CD8-positive, alpha-beta T cell (primary cell): ENCODE measurements at regions of chr17 and their contacts with region 1.

Region 1: GRCh38 chr17:48420823-48421222 is 9.2 kb downstream of the SKAP1 start:
- DNase-seq: no peak
- ATAC-seq: no peak
- H3K4me3 ChIP-seq: no peak overlapping the region
- H3K4me3 Mint-ChIP-seq: peak overlapping the region; percentile 37
- H3K27ac ChIP-seq: peak overlapping the region in 1 of 2 experiments; percentile 32
- H3K27ac Mint-ChIP-seq: no peak overlapping the region
- H3K4me1 ChIP-seq: peaks cover 72% of the 10 kb centered on the region
- H3K4me1 Mint-ChIP-seq: peaks cover 77% of the 10 kb centered on the region
- H3K27me3 ChIP-seq: no peaks in the 10 kb centered on the region
- H3K27me3 Mint-ChIP-seq: no peaks in the 10 kb centered on the region
- CTCF ChIP-seq: no peak

Region 2: GRCh38 chr17:48310748-48311213 is 110.0 kb before region 1 on chr17:
- CTCF ChIA-PET with region 1: no interaction called
- POLR2A ChIA-PET with region 1: no interaction called
- intact Hi-C with region 1: no loop called
- DNase-seq: no peak
- ATAC-seq: no peak
- H3K4me3 ChIP-seq: no peak overlapping the region
- H3K4me3 Mint-ChIP-seq: no peak overlapping the region
- H3K27ac ChIP-seq: no peak overlapping the region
- H3K27ac Mint-ChIP-seq: no peak overlapping the region
- H3K4me1 ChIP-seq: no peaks in the 10 kb centered on the region
- H3K4me1 Mint-ChIP-seq: peaks cover 23% of the 10 kb centered on the region
- H3K27me3 ChIP-seq: no peaks in the 10 kb centered on the region
- H3K27me3 Mint-ChIP-seq: no peaks in the 10 kb centered on the region
- CTCF ChIP-seq: no peak

Region 3: DNA sequence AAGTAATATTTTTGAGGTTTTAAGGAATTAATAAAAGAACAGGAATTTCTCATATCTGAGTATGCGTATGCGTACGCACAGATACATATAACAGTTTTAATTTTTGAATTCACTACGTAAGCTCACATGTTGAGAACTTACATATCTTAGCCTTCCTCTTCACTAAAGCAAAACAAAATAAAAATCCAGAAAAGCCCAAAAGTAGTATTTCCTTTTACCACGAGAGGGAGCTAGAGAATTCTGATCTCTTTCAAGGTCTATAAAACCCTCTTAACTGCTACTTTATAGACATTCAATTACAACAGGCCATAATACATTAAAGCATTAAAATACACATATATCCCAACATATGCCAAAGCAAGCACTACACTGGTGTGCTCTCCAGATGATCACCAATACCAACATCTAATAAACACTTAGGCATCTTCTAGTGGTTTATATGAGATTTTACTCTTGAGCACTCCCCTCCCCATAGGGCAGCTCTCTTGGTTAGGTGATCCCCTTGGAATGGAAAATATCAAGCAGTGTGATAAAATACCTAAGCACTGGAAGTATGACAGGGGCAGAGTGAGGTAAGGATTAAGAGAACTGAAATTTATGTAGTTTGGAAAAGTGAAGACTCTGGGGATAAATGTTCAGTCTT is 84.8 kb before region 1 on chr17:
- CTCF ChIA-PET with region 1: no interaction called
- POLR2A ChIA-PET with region 1: no interaction called
- intact Hi-C with region 1: no loop called
- DNase-seq: peak in 2 of 9 experiments; percentile 68 to 76
- ATAC-seq: peak; percentile 67
- H3K4me3 ChIP-seq: no peak overlapping the region
- H3K4me3 Mint-ChIP-seq: no peak overlapping the region
- H3K27ac ChIP-seq: no peak overlapping the region
- H3K27ac Mint-ChIP-seq: no peak overlapping the region
- H3K4me1 ChIP-seq: no peaks in the 10 kb centered on the region
- H3K4me1 Mint-ChIP-seq: peaks cover 9% of the 10 kb centered on the region
- H3K27me3 ChIP-seq: no peaks in the 10 kb centered on the region
- H3K27me3 Mint-ChIP-seq: no peaks in the 10 kb centered on the region
- CTCF ChIP-seq: peak; percentile 65

Region 4: GRCh38 chr17:48392857-48393256 is 28.0 kb before region 1 on chr17:
- CTCF ChIA-PET with region 1: interaction called, 3 read pairs
- POLR2A ChIA-PET with region 1: interaction called, 3 read pairs
- intact Hi-C with region 1: loop called in 1 of 2 experiments (anchors 5 kb)
- DNase-seq: no peak
- ATAC-seq: no peak
- H3K4me3 ChIP-seq: no peak overlapping the region
- H3K4me3 Mint-ChIP-seq: no peak overlapping the region
- H3K27ac ChIP-seq: no peak overlapping the region
- H3K27ac Mint-ChIP-seq: no peak overlapping the region
- H3K4me1 ChIP-seq: no peaks in the 10 kb centered on the region
- H3K4me1 Mint-ChIP-seq: peaks cover 59% of the 10 kb centered on the region
- H3K27me3 ChIP-seq: no peaks in the 10 kb centered on the region
- H3K27me3 Mint-ChIP-seq: no peaks in the 10 kb centered on the region
- CTCF ChIP-seq: no peak

Region 5: DNA sequence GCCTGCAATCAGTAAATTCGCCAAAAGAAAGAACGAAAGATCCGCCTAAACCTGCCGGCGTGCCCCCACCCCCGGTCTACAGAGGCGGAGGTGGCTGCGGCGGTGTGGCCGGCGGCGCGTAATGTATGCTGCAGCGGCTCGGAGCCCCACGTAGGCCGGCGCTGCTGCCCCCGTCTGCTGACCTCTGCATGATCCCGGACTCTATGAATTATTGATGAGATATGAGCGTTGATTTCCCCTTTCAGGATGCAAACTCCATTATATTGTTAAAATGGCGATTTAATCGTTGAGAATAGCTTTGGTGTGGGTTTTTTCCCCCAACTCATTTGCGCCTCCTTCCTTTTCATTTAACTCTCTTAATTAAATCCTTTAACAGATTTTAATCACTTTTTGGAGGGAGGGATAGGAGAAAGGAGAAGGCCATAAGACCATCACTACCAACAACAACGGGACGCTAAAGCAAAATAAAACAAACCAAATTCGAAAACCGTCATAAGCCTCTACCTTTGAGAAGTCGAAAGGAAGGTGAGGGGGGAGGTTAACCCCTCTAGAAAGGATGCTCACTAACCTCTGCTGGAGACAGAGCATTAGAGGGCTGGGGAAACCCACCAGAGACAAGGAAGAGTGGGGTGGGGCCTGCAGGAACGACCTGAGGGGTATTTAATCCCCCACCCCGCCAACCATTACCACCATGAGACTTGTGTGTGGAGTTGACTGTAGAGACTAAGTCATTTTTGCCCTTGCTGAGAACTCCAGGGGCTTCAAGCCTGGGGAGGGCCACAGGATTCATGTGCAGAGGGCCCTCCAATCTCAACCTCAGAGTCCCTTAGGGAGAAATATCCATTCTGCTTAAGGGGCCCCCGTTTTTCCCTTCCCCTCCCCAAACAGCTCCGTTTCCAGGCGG is 165.8 kb after region 1 on chr17:
- CTCF ChIA-PET with region 1: no interaction called
- POLR2A ChIA-PET with region 1: no interaction called
- intact Hi-C with region 1: no loop called
- DNase-seq: peak in 4 of 9 experiments; percentile 29 to 60 (median 48)
- ATAC-seq: peak; percentile 22
- H3K4me3 ChIP-seq: peak overlapping the region; percentile 75 to 81
- H3K4me3 Mint-ChIP-seq: peak overlapping the region; percentile 96
- H3K27ac ChIP-seq: no peak overlapping the region
- H3K27ac Mint-ChIP-seq: peak overlapping the region; percentile 2
- H3K4me1 ChIP-seq: peaks cover 27% of the 10 kb centered on the region
- H3K4me1 Mint-ChIP-seq: peaks cover 32% of the 10 kb centered on the region
- H3K27me3 ChIP-seq: peaks cover 12 to 46% of the 10 kb centered on the region in 2 experiments
- H3K27me3 Mint-ChIP-seq: peaks cover 83% of the 10 kb centered on the region
- CTCF ChIP-seq: no peak